MCF 10A (cell line): ENCODE measurements at regions of chr11 and their contacts with region 1.

Region 1: DNA sequence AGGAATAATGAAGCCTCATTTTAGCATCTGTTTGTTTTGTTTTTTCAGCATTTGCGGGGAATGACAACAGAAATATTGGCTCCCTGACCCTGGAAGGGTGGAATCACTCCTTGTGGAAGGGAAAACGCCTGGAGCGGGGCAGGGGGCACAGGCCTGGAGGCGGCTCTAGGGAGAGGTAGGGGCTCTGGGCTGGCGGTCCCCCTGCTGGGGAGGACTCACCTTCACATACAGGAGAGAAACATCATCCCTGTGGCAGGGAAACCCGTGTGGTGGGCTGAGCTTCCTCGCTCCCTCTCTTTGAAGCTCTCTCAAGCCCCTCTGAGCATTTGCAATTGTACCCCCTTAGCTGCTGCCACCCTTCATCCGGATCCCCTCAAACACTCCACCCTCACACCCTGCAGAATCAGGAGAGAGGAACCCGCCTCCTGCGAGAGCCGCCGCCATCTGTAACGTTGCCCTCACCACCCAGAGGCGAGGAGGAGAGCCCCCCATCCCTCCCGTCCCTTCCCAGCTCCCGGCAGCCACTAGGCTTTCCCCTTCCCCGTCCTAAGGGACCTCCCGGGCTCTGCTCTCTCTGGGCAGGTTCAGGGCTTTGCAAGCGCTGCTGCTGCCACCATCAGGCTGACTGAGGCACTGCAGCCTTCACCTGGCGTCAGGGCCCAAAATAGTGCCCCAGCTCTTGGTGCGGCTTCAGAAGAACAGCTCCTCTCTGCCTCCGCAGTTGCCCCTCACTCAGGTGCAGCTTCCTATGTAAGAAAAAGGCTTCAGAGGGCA is 10.4 kb downstream of the KIRREL3 start:
- DNase-seq: peak; percentile 49
- H3K4me3 Mint-ChIP-seq: no peak overlapping the region
- H3K27ac Mint-ChIP-seq: no peak overlapping the region
- H3K4me1 Mint-ChIP-seq: no peaks in the 10 kb centered on the region
- H3K27me3 Mint-ChIP-seq: peaks cover 53% of the 10 kb centered on the region
- CTCF ChIP-seq: peak; percentile 88

Region 2: DNA sequence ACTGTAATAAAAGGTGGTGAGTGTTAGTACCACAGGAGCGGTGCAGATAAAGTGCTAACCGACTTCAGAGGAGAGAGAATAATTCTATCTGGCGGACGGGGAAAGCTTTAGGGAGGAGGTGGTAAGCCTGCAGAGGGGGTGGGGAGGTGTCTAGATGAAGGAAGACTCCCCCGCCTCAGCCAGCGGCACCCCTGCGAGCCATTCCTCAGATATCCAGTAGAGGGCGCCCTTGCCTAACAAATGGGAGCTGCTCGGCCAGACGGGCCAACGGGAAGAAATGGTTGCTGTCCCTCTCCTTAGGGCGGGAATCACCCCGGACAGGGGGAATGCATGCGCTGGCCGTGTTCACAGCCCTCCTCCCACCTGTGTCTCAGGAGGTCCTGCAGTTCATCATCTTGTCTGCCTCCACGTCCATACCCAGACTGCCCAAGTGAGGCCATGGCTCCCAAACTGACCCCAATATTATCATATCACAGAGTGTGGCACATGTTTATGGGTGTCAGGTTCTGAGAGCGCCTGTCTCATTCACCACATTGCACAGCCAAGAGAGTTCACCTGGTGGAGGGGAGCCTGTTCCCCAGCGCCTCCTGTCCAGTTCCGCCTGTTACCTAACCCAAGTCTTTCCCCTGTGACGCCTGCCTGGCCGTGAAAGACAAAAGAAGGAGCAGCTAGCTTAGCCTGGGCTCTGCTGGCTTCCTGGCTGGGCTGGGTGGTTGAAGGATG is 549.2 kb before region 1 on chr11:
- CTCF ChIA-PET with region 1: interaction called, 19 read pairs
- POLR2A ChIA-PET with region 1: no interaction called
- intact Hi-C with region 1: loop called (anchors 1 kb)
- DNase-seq: peak; percentile 80
- H3K4me3 Mint-ChIP-seq: no peak overlapping the region
- H3K27ac Mint-ChIP-seq: no peak overlapping the region
- H3K4me1 Mint-ChIP-seq: peaks cover 5% of the 10 kb centered on the region
- H3K27me3 Mint-ChIP-seq: no peaks in the 10 kb centered on the region
- CTCF ChIP-seq: peak; percentile 95

Region 3: DNA sequence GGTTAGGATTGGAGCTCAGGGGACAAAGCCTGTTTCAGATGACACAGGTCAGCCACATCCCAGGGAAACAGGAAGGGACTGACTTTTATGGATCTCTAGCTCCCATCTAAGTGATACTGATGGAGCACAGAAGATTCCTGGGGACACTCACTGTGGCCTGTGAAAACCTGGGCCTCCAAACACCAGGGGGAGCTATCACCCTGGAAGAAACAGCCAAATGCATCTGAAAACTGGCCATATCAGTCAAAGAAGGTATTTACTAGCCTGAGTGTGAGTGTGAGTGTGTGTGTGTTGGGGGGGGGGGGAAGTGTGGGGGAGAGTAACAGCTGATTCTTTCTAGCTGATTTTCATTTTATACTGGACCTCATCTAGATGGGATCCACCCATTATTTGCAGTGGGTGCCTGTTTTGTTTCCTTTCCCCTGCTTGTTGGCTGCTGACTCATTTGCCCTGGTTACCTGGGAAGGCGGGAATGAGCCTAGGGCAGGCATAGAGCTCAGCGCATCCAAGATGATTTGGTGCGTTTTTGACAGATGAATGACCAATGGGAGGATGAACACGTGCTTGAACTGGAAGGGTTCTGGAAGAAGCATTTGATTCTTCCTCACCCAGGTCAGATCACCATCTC is 273.6 kb before region 1 on chr11:
- CTCF ChIA-PET with region 1: interaction called, 37 read pairs
- POLR2A ChIA-PET with region 1: no interaction called
- intact Hi-C with region 1: loop called (anchors 1 kb)
- DNase-seq: peak; percentile 54
- H3K4me3 Mint-ChIP-seq: no peak overlapping the region
- H3K27ac Mint-ChIP-seq: no peak overlapping the region
- H3K4me1 Mint-ChIP-seq: no peaks in the 10 kb centered on the region
- H3K27me3 Mint-ChIP-seq: peaks cover 37% of the 10 kb centered on the region
- CTCF ChIP-seq: peak; percentile 18

Region 4: DNA sequence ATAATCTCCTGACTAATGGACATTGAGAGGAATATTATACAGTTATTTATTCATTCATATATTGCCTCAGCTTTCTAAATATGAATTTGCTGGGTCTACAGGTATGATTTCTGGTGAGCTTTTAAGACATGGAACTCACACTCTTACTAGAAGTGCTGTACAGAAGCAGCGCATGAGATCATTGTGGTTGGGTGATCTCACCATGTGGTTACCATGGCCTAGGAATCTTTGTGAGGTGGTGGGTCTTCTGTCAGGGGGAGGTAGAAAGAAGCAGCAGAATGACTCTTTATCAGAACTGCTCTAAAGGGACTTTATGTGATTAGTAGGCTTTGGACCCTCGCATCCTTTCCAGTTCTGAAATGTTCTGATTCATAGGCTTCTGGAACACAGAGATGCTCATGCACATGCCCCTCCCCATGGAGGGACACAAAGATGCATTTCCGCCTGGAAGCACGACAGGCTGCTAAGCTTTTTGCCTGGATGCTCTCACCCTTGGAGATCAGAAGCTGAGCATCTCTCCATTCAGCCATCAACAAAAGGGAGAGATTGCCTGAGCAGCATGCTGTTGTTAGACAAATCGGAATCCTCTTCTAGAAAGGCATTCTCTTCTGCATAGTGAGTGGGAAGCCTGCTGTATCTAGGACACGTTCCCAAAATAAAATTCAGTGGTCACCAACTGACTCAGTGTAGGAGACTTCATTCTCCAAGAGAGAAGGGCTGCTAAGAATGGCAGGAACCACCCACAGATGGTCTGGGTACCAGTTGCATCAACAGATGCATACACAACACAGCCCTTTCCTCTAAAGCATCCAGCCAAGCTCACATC is 40.9 kb before region 1 on chr11:
- CTCF ChIA-PET with region 1: no interaction called
- POLR2A ChIA-PET with region 1: no interaction called
- intact Hi-C with region 1: no loop called
- DNase-seq: no peak
- H3K4me3 Mint-ChIP-seq: no peak overlapping the region
- H3K27ac Mint-ChIP-seq: no peak overlapping the region
- H3K4me1 Mint-ChIP-seq: no peaks in the 10 kb centered on the region
- H3K27me3 Mint-ChIP-seq: no peaks in the 10 kb centered on the region
- CTCF ChIP-seq: no peak

Region 5: GRCh38 chr11:126978911-126979310 is 11.2 kb before region 1 on chr11:
- CTCF ChIA-PET with region 1: interaction called, 13 read pairs
- POLR2A ChIA-PET with region 1: no interaction called
- intact Hi-C with region 1: no loop called
- DNase-seq: no peak
- H3K4me3 Mint-ChIP-seq: no peak overlapping the region
- H3K27ac Mint-ChIP-seq: no peak overlapping the region
- H3K4me1 Mint-ChIP-seq: no peaks in the 10 kb centered on the region
- H3K27me3 Mint-ChIP-seq: peaks cover 13% of the 10 kb centered on the region
- CTCF ChIP-seq: no peak

Region 6: GRCh38 chr11:127003260-127003981 is 13.3 kb after region 1 on chr11:
- CTCF ChIA-PET with region 1: interaction called, 13 read pairs
- POLR2A ChIA-PET with region 1: no interaction called
- intact Hi-C with region 1: no loop called
- DNase-seq: no peak
- H3K4me3 Mint-ChIP-seq: no peak overlapping the region
- H3K27ac Mint-ChIP-seq: no peak overlapping the region
- H3K4me1 Mint-ChIP-seq: no peaks in the 10 kb centered on the region
- H3K27me3 Mint-ChIP-seq: no peaks in the 10 kb centered on the region
- CTCF ChIP-seq: no peak